ENCODE measurements at regions of chr12 and their contacts with region 1.

Region 1: GRCh38 chr12:42589465-42590329 is at the start of gene PRICKLE1:
- DNase-seq: peak; percentile 38 to 71 (median 52)
- H3K4me3 ChIP-seq: peak within 1 kb of the TSS; percentile 81
- H3K27ac ChIP-seq: peak within 1 kb of the TSS in 1 of 2 donors; percentile 27
- H3K4me1 ChIP-seq: peaks cover 7% of the 10 kb centered on the region
- H3K27me3 ChIP-seq: no peaks in the 10 kb centered on the region
- CTCF ChIP-seq: no peak
- EP300 ChIP-seq: no peak
- POLR2A ChIP-seq: no peak
- total RNA-seq, gene PRICKLE1: 14.2 to 35.2 (median 22.5) TPM

Region 2: DNA sequence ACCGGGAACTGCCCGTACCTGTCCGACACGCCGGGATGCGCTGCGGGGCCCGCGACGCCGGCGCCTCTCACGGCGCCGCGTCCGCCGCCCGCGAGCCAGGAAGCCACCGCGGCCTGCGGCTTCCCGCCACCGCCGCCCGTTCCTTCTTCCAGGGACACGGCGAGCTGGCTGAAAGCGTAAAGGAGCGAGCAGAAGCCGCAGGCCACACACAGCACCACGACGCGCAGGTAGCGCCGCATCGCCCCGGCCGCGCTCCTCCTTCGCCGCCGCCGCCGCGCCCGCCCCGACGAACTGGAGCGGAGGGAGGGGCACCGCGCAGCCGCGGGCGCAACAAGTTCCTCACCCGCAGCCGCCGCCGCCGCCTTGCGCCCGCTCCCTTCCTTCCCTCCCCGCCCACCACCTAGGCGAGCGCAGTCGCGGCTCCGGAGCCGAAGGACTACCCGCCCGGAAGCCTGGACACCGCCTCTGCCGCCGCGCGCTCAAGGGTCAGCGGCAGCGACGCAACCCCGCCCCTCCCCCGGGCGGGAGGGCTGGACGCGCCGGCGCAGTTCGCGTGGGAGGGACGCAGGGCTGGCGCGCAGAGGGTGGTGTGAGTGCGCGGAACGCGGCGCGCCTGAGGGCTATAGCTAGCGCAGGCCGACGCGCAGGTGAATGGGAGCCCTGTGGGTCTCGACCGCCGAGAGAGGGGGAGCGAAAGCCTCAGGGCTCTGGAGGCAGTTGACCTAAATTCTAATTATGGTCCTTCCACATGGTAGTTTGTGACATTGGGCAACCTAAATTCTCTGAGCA is 445.1 kb before region 1 on chr12 and contains the start of gene GXYLT1:
- intact Hi-C with region 1: loop called in 1 of 4 experiments (anchors 10 kb)
- DNase-seq: peak; percentile 84 to 93 (median 90)
- H3K4me3 ChIP-seq: peak within 1 kb of the TSS; percentile 64
- H3K27ac ChIP-seq: peak within 1 kb of the TSS; percentile 80 to 84
- H3K4me1 ChIP-seq: peaks cover 2% of the 10 kb centered on the region
- H3K27me3 ChIP-seq: no peaks in the 10 kb centered on the region
- CTCF ChIP-seq: peak in 1 of 3 donors; percentile 11
- EP300 ChIP-seq: no peak
- POLR2A ChIP-seq: peak; percentile 64
- total RNA-seq, gene GXYLT1: 9.8 to 15.4 (median 12.7) TPM